PC-9 (cell line): ENCODE measurements at regions of chr1 and their contacts with region 1.

Region 1: DNA sequence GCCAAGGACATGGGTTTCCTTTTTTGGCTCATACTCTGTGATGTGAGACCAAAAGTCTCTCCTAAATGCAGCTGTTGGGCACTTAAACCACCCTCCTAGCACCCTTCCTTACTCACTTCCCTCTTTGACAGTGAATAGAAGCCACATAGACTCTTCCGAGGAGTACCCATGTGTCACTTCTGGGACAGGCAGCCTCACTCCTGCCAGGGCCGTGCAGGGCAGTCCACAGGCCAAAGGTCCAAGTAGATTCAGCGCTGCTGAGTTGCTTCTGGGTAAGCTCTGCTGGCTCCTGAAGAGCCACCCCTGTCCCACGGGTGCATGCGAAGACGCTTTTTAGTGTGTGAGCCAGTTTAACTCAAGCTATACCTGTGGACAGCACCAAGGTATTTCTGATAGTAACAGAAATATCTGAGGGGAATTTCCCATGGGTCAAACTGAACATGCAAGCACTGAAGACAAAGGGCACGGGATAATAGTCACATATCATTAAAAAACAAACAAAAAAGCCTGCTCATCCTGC is 36.8 kb upstream of the BMP8B start:
- DNase-seq: peak in 1 of 2 experiments; percentile 37
- H3K4me3 ChIP-seq: no peak overlapping the region
- H3K27ac ChIP-seq: no peak overlapping the region
- H3K4me1 ChIP-seq: peaks cover 27% of the 10 kb centered on the region
- H3K27me3 ChIP-seq: no peaks in the 10 kb centered on the region
- CTCF ChIP-seq: no peak

Region 2: DNA sequence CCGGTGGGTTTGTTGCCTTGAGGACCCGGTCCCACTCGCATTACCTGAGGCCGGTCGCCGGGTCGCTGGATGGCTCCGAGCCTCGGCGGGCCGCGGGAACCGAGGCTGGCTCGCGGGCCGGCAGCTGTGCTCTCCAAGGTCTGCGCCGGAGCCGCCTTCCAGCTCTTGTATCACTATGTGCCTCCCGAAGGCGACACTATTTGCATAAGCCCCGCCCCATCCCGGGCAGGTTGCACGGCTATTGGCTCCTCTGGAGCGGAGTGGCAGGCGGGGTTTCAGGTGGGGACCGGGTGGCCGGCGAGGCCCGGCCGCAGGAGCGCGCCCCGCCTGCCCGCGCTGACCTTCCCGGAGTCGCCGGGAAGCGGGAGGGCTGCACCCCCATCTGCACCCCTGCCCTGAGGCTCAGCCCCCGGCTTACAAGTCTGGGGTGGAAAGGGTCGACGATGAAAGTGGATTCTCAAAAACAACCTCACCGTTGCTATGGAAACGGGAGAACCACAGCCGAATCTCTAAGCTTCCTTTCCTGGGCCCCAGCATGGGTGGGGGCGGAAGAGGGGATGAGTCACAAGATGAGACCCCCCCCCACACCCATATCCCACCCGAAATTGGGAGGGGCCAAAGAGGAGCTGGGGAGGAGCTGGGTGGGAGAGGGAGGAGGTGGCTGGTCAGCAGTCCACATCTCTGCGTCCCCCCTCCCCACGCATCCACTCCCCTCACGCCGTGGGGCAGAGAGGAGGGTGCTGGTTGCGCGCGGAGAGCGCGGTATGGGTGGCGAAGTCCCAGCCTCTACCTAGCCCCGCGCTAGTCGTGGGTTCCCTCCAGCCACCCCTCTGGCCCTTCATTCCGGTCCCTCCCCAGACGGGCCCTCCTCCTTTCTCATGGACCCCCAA is 134.0 kb before region 1 on chr1 and contains the start of gene HPCAL4:
- CTCF ChIA-PET with region 1: no interaction called
- POLR2A ChIA-PET with region 1: no interaction called
- intact Hi-C with region 1: no loop called
- DNase-seq: peak; percentile 86 to 97
- H3K4me3 ChIP-seq: peak within 1 kb of the TSS; percentile 52
- H3K27ac ChIP-seq: no peak within 1 kb of the TSS
- H3K4me1 ChIP-seq: peaks cover 15% of the 10 kb centered on the region
- H3K27me3 ChIP-seq: peaks cover 7% of the 10 kb centered on the region; the same call in 1 of the 2 replicates
- CTCF ChIP-seq: no peak
- total RNA-seq, gene HPCAL4: 0.07 TPM in 1 of 2 replicates, not detected in the other

Region 3: GRCh38 chr1:39877231-39877778 is 51.8 kb after region 1 on chr1:
- CTCF ChIA-PET with region 1: interaction called, 11 read pairs
- POLR2A ChIA-PET with region 1: no interaction called
- intact Hi-C with region 1: no loop called
- DNase-seq: no peak
- H3K4me3 ChIP-seq: no peak overlapping the region
- H3K27ac ChIP-seq: no peak overlapping the region
- H3K4me1 ChIP-seq: peaks cover 11% of the 10 kb centered on the region
- H3K27me3 ChIP-seq: no peaks in the 10 kb centered on the region
- CTCF ChIP-seq: no peak